GM23248 (cell line): ENCODE measurements at regions of chr5 and their contacts with region 1.

Region 1: DNA sequence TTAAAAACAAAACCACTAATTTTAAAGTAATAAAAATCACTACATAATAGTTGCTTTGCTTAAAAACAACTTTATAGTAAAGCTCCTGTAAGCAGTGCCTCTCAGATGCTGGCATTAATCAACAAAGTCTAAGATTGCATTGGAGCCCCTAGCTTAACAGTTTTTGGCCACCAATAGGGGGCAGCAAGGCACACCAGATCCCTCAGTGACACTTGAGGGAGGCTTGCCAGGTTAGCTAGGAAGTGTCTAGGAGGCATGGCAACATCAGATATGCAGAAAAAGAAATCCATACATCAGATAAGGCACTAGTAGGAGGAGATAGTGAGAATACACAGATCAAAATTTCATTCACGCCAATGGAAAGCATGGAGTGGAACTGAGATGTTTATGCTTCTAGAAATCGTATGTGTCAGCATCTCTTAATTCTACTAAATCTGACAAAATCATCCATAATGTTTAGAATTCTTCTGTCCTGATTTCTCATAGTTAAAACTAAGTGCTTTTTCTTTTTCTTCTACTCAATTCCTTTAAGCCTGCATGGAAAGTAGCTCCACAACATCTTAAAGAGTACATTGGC is 73.6 kb upstream of the PAM start:
- DNase-seq: peak; percentile 84
- H3K4me3 ChIP-seq: no peak overlapping the region
- H3K27ac ChIP-seq: no peak overlapping the region
- H3K4me1 ChIP-seq: peaks cover 27% of the 10 kb centered on the region
- H3K27me3 ChIP-seq: no peaks in the 10 kb centered on the region

Region 2: DNA sequence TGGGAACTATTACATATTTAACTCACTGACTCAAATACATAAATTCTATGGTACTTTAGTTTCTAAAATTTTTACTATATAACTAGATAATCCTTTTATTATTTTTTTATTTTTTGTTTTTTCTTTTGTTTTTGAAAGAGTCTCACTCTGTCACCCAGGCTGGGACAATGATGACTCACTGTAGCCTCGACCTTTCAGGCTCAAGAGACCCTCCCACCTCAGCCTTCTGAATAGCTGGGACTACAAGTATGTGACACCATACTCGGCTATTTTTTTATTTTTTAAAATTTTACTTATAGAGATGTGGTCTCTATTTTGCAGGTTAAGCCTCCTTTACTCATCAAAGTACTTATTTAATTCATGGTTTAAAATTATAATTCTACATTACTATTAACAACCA is 293.3 kb before region 1 on chr5:
- in situ Hi-C with region 1: no loop called
- DNase-seq: no peak
- H3K4me3 ChIP-seq: no peak overlapping the region
- H3K27ac ChIP-seq: no peak overlapping the region
- H3K4me1 ChIP-seq: no peaks in the 10 kb centered on the region
- H3K27me3 ChIP-seq: no peaks in the 10 kb centered on the region

Region 3: GRCh38 chr5:102778478-102778877 is 97.0 kb after region 1 on chr5:
- in situ Hi-C with region 1: loop called (anchors 10 kb)
- DNase-seq: peak; percentile 88
- H3K4me3 ChIP-seq: peak overlapping the region; percentile 34; the same call in 1 of the 2 replicates
- H3K27ac ChIP-seq: peak overlapping the region; percentile 72
- H3K4me1 ChIP-seq: peaks cover 19% of the 10 kb centered on the region
- H3K27me3 ChIP-seq: no peaks in the 10 kb centered on the region